ENCODE measurements at regions of chr10 and their contacts with region 1.

Region 1: DNA sequence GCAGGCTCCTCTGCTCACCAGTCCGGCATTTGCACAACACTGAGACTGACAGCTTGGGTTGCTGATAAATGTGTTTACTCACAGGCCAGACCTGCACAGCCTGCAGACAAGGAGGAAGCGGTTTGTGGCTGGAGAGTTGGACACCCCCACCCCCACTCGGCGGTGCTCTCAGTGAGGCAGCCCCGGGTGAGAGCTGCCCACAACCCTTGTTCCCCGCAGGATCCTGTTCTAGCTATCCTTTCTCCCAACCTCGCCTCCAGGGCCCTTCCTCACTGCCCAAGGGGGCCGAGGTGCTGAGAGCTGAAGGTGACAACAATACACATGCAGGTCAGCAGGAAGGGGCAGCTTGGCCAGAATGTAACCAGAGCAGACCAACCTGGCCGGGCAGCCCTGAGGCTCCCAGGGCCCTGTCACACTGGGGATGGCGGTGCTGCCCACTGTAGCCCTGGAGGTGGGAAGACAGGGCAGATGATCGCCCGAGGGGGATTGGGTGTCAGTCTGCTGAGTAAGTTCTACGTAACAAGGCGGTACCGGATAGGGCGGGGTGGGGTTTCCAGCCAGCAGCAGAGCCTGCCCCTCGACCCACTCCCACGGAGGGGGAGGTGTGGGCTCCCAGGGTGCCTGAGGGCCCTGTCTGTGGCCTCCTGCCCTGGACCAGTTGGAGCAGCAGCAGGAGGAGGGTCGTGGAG is 2.1 kb upstream of the ADAM8 start:
- DNase-seq: peak; percentile 78
- CTCF ChIP-seq: no peak

Region 2: GRCh38 chr10:133151543-133151972 is 127.2 kb before region 1 on chr10:
- CTCF ChIA-PET with region 1: no interaction called
- POLR2A ChIA-PET with region 1: no interaction called
- DNase-seq: no peak
- CTCF ChIP-seq: no peak

Region 3: DNA sequence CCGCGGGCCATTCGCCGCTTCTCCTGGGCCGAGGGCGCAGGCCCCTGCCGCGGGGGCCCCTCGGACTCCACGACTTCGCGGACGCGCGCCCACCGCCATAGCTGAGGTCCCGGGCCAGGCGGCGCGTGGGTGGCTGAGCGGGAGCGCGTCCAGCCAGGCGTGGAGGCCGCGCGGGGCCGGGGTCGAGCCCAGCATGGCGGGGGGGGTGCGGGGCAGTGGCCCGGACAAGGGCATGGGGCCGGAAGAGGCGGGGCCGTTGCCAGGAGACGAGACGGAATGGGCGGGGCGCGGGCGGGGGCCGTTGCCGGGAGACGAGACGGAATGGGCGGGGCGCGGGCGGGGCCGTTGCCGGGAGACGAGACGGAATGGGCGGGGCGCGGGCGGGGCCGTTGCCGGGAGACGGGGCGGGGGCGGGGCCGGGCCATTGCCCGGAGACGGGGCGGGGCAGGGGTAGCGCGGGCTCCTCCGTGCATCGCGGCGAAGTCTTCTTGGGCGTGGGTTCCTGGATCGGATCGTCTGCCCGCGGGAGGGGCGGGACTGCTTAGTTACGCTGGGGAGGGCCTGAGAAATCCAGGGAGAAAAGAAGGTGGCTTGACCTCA is 16.9 kb before region 1 on chr10:
- CTCF ChIA-PET with region 1: interaction called, 21 read pairs
- POLR2A ChIA-PET with region 1: interaction called, 3 read pairs
- DNase-seq: peak; percentile 95
- CTCF ChIP-seq: no peak

Region 4: DNA sequence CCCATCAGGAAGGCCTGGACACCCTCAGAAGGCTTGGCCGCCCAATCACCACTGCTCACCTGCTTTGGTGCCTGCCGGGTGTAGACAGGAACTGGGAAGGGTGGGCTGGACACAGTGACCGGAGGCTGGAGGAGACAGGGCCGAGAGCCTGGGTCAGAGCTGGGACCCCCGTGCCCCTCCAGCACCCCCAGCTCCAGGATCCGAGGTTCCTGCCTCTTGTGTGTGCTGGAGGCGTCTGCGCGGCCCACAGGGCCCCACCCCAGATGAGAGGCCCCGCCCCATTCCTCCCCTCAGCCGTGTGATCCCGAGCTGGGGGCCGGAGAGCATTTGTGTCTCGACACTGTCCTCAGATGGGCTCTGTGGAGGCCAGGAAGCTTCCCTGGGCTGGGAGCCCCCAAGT is 11.4 kb before region 1 on chr10:
- CTCF ChIA-PET with region 1: interaction called, 21 read pairs
- POLR2A ChIA-PET with region 1: interaction called, 3 read pairs
- DNase-seq: no peak
- CTCF ChIP-seq: no peak

Region 5: DNA sequence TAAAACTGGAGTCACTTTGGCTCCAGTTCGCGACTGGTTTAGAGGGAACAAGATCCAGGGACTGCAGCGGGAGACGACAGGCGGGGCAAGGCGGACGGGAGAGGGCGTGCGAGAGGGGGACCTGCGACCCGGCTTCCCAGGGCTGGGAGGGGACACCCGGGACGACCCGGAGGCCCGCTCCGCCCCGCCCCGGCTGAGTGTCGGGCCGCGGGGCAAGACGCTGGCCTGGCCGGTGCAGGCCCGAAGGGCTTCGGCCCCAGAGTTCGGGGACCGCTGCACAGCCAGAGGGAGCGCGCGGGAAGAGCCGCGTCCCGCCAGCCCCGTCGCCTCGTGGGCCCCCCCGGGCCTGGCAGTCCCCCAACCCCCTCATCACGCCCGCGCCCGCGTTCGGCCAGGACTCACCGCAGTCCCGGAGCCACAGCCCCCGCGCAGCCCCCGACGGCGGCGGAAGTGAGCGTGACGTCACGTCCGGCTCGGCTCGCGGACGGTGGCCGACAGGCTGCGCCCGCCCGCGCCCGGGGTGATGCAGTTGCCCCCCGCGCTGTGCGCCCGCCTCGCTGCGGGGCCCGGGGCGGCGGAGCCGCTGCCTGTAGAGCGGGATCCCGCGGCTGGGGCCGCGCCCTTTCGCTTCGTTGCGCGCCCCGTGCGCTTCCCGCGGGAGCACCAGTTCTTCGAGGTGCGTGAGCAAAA is 29.8 kb after region 1 on chr10 and contains the starts of genes TUBGCP2 and ZNF511:
- CTCF ChIA-PET with region 1: interaction called, 28 read pairs
- POLR2A ChIA-PET with region 1: no interaction called
- DNase-seq: peak; percentile 90
- CTCF ChIP-seq: no peak

Region 6: DNA sequence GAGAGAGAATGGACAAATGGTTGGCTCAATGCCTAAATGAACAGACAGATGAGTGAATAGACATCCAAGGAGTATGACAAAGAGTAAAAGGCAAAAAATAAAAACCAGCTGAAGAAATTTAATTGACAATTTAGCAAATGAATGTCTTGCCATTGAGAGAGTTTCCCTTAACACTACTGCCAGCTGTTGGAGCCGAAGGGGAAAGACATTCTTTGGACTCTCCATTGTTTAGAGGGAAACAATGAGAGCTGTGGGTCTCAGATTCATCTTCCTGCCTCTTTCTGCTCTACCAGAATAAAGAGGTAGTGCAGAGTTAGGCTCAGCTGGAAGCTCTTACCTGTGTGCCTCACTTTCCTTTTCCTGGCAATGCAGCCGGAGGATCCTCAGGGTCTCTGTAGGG is 278.8 kb after region 1 on chr10:
- CTCF ChIA-PET with region 1: no interaction called
- POLR2A ChIA-PET with region 1: no interaction called
- DNase-seq: no peak
- CTCF ChIP-seq: no peak

Measured in GM10248 (cell line).